CD4-positive, alpha-beta T cell (primary cell): ENCODE measurements at regions of chr13 and their contacts with region 1.

Region 1: DNA sequence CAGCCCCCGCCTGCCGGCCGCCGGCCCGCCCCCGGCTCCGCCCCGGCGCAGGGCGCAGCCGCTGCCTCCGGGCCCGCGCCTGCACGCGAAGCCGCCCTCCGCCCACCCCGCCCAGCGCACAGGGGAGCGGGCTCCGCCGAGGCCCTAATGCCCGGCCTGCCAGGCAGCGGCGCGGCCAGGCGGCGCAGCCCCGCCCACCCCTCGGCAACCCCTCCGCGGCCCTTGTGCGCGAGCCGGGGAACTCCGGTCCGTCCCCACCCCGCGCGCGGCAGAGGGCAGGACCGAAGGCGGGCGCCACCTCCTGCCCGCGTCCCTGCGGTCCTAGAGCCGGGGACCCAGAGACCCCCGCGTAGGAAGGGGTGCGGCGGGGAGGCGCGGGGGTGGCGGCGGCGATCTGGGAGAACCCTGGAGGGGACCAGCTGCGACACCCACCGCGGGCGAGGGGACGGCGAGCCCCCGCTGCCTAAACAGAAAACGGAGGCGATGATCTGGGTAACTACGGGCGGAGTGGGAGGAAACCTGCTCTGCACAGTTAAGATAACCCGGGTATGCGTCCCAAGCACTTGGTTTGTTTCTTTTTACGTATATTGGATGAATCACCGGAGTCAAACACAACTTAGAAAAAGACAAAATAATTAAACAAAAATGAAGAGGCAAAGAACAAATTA is 350 bp upstream of the USP12 start:
- DNase-seq: peak; percentile 81 to 97 (median 92)
- ATAC-seq: peak; percentile 83
- H3K4me3 ChIP-seq: peak overlapping the region; percentile 73
- H3K4me3 Mint-ChIP-seq: peak overlapping the region; percentile 87
- H3K27ac ChIP-seq: peak overlapping the region; percentile 89
- H3K27ac Mint-ChIP-seq: peak overlapping the region; percentile 91
- H3K4me1 ChIP-seq: peaks cover 36% of the 10 kb centered on the region
- H3K4me1 Mint-ChIP-seq: peaks cover 45% of the 10 kb centered on the region
- H3K27me3 ChIP-seq: no peaks in the 10 kb centered on the region
- H3K27me3 Mint-ChIP-seq: no peaks in the 10 kb centered on the region
- CTCF ChIP-seq: peak; percentile 16

Region 2: GRCh38 chr13:25301347-25302047 is 1870.5 kb before region 1 on chr13 and contains the start of gene NUP58:
- CTCF ChIA-PET with region 1: no interaction called
- POLR2A ChIA-PET with region 1: no interaction called
- intact Hi-C with region 1: loop called in 1 of 2 experiments (anchors 5 kb)
- DNase-seq: peak; percentile 87 to 98 (median 90)
- ATAC-seq: peak; percentile 97
- H3K4me3 ChIP-seq: peak within 1 kb of the TSS; percentile 80
- H3K4me3 Mint-ChIP-seq: peak within 1 kb of the TSS; percentile 99
- H3K27ac ChIP-seq: peak within 1 kb of the TSS; percentile 92 to 94
- H3K27ac Mint-ChIP-seq: peak within 1 kb of the TSS; percentile 95
- H3K4me1 ChIP-seq: peaks cover 26% of the 10 kb centered on the region
- H3K4me1 Mint-ChIP-seq: peaks cover 49% of the 10 kb centered on the region
- H3K27me3 ChIP-seq: peaks cover 0 to 4% of the 10 kb centered on the region in 2 experiments
- H3K27me3 Mint-ChIP-seq: peaks cover 14% of the 10 kb centered on the region
- CTCF ChIP-seq: no peak
- total RNA-seq, gene NUP58: 56.5 to 60.9 TPM

Region 3: GRCh38 chr13:27097691-27098090 is 74.3 kb before region 1 on chr13:
- CTCF ChIA-PET with region 1: interaction called, 3 read pairs
- POLR2A ChIA-PET with region 1: no interaction called
- intact Hi-C with region 1: loop called in 1 of 2 experiments (anchors 5 kb)
- DNase-seq: no peak
- ATAC-seq: no peak
- H3K4me3 ChIP-seq: no peak overlapping the region
- H3K4me3 Mint-ChIP-seq: no peak overlapping the region
- H3K27ac ChIP-seq: no peak overlapping the region
- H3K27ac Mint-ChIP-seq: no peak overlapping the region
- H3K4me1 ChIP-seq: no peaks in the 10 kb centered on the region
- H3K4me1 Mint-ChIP-seq: peaks cover 21% of the 10 kb centered on the region
- H3K27me3 ChIP-seq: no peaks in the 10 kb centered on the region
- H3K27me3 Mint-ChIP-seq: no peaks in the 10 kb centered on the region
- CTCF ChIP-seq: no peak

Region 4: DNA sequence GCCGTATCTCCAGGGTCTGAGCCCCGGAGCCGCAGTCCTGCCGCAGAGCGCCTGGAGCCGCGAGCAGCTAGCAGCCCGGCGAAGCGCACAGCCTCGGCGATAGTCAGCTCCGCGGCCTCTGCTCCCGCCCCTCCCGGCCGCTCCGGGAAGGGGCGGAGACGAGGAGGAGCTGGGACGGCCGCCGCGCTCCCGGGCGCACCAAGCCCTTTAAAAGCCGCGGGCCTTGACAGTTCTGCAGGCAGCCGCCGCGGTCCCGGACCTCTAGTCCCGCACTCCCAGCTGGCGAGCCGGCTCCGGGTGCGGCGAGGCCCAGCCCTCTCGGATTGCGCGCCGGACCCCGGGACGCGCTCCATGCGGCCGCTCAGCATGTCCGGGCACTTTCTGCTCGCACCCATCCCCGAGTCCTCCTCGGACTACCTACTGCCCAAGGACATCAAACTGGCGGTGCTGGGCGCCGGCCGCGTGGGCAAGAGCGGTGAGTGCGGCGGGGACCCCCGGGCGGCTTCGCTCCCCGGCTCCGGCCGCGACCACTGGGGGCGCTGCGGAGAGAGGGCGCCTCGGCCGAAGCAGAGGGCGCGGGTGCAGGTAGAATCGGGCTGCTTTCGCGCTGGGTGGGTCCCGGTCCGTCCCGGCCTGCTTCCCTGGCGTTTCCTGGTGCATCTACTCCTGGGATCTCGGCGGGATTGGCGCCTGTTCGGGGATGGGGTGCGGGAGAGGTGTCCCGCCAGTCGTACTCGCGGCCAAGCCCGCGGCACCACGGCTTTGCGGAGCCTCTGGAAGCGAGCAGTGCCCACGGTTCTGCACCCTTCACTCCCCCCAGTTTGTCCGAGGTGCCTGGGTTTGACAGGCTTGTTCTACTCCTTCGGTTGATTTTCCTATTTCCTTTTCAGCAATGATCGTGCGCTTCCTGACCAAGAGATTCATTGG is 98.9 kb after region 1 on chr13 and contains the start of gene RASL11A:
- CTCF ChIA-PET with region 1: interaction called, 3 read pairs
- POLR2A ChIA-PET with region 1: interaction called, 6 read pairs
- intact Hi-C with region 1: loop called in 1 of 2 experiments (anchors 5 kb)
- DNase-seq: peak; percentile 52 to 85 (median 68)
- ATAC-seq: peak; percentile 91
- H3K4me3 ChIP-seq: peak within 1 kb of the TSS; percentile 73
- H3K4me3 Mint-ChIP-seq: peak within 1 kb of the TSS; percentile 92
- H3K27ac ChIP-seq: no peak within 1 kb of the TSS
- H3K27ac Mint-ChIP-seq: peak within 1 kb of the TSS; percentile 68
- H3K4me1 ChIP-seq: peaks cover 17% of the 10 kb centered on the region
- H3K4me1 Mint-ChIP-seq: peaks cover 34% of the 10 kb centered on the region
- H3K27me3 ChIP-seq: peaks cover 5 to 8% of the 10 kb centered on the region in 2 experiments
- H3K27me3 Mint-ChIP-seq: peaks cover 14% of the 10 kb centered on the region
- CTCF ChIP-seq: peak; percentile 99
- total RNA-seq, gene RASL11A: 2.9 to 4.7 TPM

Region 5: GRCh38 chr13:27449936-27450828 is 278.2 kb after region 1 on chr13 and contains the start of gene MTIF3:
- CTCF ChIA-PET with region 1: no interaction called
- POLR2A ChIA-PET with region 1: interaction called, 4 read pairs
- intact Hi-C with region 1: loop called (anchors 5 kb)
- DNase-seq: peak; percentile 95 to 99 (median 97)
- ATAC-seq: peak; percentile 79
- H3K4me3 ChIP-seq: peak within 1 kb of the TSS; percentile 83
- H3K4me3 Mint-ChIP-seq: peak within 1 kb of the TSS; percentile 98
- H3K27ac ChIP-seq: peak within 1 kb of the TSS; percentile 95 to 97
- H3K27ac Mint-ChIP-seq: peak within 1 kb of the TSS; percentile 97
- H3K4me1 ChIP-seq: peaks cover 58% of the 10 kb centered on the region
- H3K4me1 Mint-ChIP-seq: peaks cover 74% of the 10 kb centered on the region
- H3K27me3 ChIP-seq: no peaks in the 10 kb centered on the region
- H3K27me3 Mint-ChIP-seq: no peaks in the 10 kb centered on the region
- CTCF ChIP-seq: peak; percentile 31
- total RNA-seq, gene MTIF3: 13.6 to 14.5 TPM

Region 6: GRCh38 chr13:27569405-27569804 is 397.4 kb after region 1 on chr13:
- CTCF ChIA-PET with region 1: no interaction called
- POLR2A ChIA-PET with region 1: no interaction called
- intact Hi-C with region 1: no loop called
- DNase-seq: no peak
- ATAC-seq: no peak
- H3K4me3 ChIP-seq: no peak overlapping the region
- H3K4me3 Mint-ChIP-seq: no peak overlapping the region
- H3K27ac ChIP-seq: no peak overlapping the region
- H3K27ac Mint-ChIP-seq: no peak overlapping the region
- H3K4me1 ChIP-seq: no peaks in the 10 kb centered on the region
- H3K4me1 Mint-ChIP-seq: peaks cover 13% of the 10 kb centered on the region
- H3K27me3 ChIP-seq: no peaks in the 10 kb centered on the region
- H3K27me3 Mint-ChIP-seq: no peaks in the 10 kb centered on the region
- CTCF ChIP-seq: no peak

Region 7: DNA sequence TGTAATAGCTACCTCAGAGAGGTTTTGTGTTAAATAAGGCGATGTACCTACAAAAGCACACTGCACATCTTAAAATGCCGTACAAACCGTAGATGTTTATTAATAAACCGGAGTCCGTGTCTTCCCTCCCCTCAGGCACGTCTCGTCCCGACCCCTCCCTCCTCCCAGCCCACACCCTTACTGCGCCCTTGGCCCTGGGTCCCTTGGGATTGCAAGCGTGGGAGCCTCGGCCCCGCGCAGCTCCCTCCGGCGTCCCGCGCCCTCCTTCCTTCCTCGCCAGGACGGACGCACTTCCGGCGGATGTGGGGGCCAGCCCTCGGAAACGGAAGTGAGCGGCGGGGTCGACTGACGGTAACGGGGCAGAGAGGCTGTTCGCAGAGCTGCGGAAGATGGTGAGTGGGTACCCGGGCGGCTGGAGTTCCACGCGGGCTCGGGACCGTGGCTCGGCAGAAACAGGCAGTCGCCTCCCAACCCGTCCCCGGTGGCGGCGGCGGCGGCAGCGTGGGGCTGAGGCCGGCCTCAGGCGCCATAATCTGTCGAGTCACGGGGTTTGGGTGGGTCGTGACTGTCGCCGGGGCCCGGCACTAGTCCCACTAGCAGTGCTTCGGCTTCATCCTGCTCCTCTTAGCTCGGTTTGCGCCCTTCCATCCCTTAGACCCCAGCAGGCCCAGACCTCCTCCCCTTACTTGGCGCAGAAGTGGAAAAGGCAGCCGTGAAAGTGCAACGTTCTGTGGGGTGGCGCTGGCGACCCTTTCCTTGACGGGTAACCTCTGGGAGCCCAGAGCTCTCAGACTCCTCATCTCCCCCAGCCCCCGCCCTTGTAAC is 1487.0 kb after region 1 on chr13 and contains the start of gene POMP:
- CTCF ChIA-PET with region 1: no interaction called
- POLR2A ChIA-PET with region 1: no interaction called
- intact Hi-C with region 1: loop called in 1 of 2 experiments (anchors 5 kb)
- DNase-seq: peak; percentile 86 to 95 (median 89)
- ATAC-seq: peak; percentile 84
- H3K4me3 ChIP-seq: peak within 1 kb of the TSS; percentile 84
- H3K4me3 Mint-ChIP-seq: peak within 1 kb of the TSS; percentile 98
- H3K27ac ChIP-seq: peak within 1 kb of the TSS; percentile 92 to 95
- H3K27ac Mint-ChIP-seq: peak within 1 kb of the TSS; percentile 99
- H3K4me1 ChIP-seq: peaks cover 27% of the 10 kb centered on the region
- H3K4me1 Mint-ChIP-seq: peaks cover 72% of the 10 kb centered on the region
- H3K27me3 ChIP-seq: no peaks in the 10 kb centered on the region
- H3K27me3 Mint-ChIP-seq: no peaks in the 10 kb centered on the region
- CTCF ChIP-seq: no peak
- total RNA-seq, gene POMP: 25.8 to 28.5 TPM